K562 (cell line): ENCODE measurements at regions of chr6 and their contacts with region 1.

Region 1: GRCh38 chr6:15551798-15552197 is 111.0 kb downstream of the DTNBP1 start:
- DNase-seq: peak in 1 of 4 experiments; percentile 44
- ATAC-seq: no peak
- H3K4me3 ChIP-seq: no peak overlapping the region
- H3K27ac ChIP-seq: no peak overlapping the region
- H3K4me1 ChIP-seq: peaks cover 20 to 50% of the 10 kb centered on the region in 2 experiments
- H3K27me3 ChIP-seq: no peaks in the 10 kb centered on the region
- CTCF ChIP-seq: no peak
- EP300 ChIP-seq: no peak
- POLR2A ChIP-seq: no peak
- RAD21 ChIP-seq: peak; percentile 7 to 24; a peak in 2 of 4 replicates

Region 2: DNA sequence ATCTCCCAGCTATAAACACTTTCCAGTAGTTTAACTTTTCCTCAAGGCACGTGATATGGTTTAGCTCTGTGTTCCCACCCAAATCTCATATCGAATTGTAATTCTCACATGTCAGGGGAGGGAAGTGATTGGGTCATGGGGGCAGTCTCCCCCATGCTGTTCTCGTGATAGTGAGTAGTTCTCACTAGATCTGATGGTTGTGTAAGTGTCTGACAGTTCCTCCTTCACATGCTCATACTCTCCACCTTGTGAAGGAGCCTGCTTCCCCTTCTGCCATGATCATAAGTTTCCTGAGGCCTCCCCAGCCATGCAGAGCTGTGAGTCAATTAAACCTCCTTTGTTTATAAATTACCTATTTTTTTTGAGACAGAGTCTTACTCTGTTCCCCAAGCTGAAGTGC is 16.8 kb before region 1 on chr6:
- CTCF ChIA-PET with region 1: no interaction called
- POLR2A ChIA-PET with region 1: interaction called, 10 read pairs
- in situ Hi-C with region 1: no loop called
- intact Hi-C with region 1: no loop called
- DNase-seq: no peak
- ATAC-seq: peak; percentile 42; the same call in 1 of the 3 replicates
- H3K4me3 ChIP-seq: no peak overlapping the region
- H3K27ac ChIP-seq: no peak overlapping the region
- H3K4me1 ChIP-seq: peaks cover 0 to 2% of the 10 kb centered on the region in 2 experiments; a peak in 2 of 5 replicates
- H3K27me3 ChIP-seq: no peaks in the 10 kb centered on the region
- CTCF ChIP-seq: no peak
- EP300 ChIP-seq: no peak
- POLR2A ChIP-seq: no peak
- RAD21 ChIP-seq: no peak

Region 3: GRCh38 chr6:15569035-15569995 is 17.5 kb after region 1 on chr6:
- CTCF ChIA-PET with region 1: no interaction called
- POLR2A ChIA-PET with region 1: interaction called, 9 read pairs
- in situ Hi-C with region 1: no loop called
- intact Hi-C with region 1: loop called (anchors 1 kb)
- DNase-seq: peak; percentile 78 to 91 (median 86)
- ATAC-seq: peak; percentile 98
- H3K4me3 ChIP-seq: no peak overlapping the region
- H3K27ac ChIP-seq: peak overlapping the region; percentile 92
- H3K4me1 ChIP-seq: peaks cover 6 to 28% of the 10 kb centered on the region in 2 experiments; a peak in 4 of 5 replicates
- H3K27me3 ChIP-seq: no peaks in the 10 kb centered on the region
- CTCF ChIP-seq: peak in 1 of 3 experiments; percentile 25; a peak in 1 of 6 replicates
- EP300 ChIP-seq: peak; percentile 58
- POLR2A ChIP-seq: peak; percentile 67
- RAD21 ChIP-seq: peak in 1 of 2 experiments; percentile 48; a peak in 2 of 4 replicates